WTC11 (cell line): ENCODE measurements at regions of chr5 and their contacts with region 1.

Region 1: DNA sequence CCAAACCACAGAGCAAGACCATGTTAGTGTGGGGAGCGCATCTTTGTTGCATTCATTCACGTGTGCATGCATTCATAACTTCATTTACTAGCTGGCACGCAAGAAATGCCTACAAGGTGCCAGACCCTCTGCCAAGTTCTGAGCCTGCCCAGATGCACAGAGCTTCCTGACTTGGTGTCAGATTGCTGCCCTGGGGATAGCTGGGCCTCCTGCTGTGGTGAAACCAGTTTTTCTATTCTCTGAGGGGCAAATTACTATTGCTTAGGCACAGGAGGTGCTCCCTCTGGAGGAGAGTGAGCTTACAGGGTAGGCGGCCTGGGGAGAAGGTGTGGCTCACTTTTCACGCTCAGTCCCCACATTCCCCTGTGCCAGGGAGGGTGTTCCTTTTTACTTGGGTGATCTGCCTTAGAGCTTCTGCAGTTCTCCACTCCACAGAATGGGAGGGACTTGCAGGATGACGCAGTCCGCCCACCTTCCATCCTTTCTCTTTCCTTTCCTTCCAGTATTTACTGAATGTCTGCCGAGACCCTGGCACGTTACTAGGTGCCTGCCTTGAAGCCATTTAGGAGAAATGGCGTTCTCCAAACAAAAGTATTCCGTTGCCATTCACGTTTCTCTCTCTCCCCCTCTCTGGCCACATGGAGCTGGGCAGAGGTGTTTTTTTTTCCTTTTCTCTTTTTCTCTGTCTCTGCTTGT is 27.9 kb upstream of the CTNNA1 start:
- DNase-seq: peak; percentile 78
- ATAC-seq: peak; percentile 90
- H3K4me3 Mint-ChIP-seq: peak overlapping the region; percentile 30; the same call in 1 of the 2 replicates
- H3K27ac Mint-ChIP-seq: peak overlapping the region; percentile 96
- H3K4me1 Mint-ChIP-seq: peaks cover 45% of the 10 kb centered on the region
- H3K27me3 Mint-ChIP-seq: no peaks in the 10 kb centered on the region; the same call in 1 of the 2 replicates
- CTCF ChIP-seq: 0 out of 2 replicates have a peak, but pooled peaks have one; percentile 11

Region 2: DNA sequence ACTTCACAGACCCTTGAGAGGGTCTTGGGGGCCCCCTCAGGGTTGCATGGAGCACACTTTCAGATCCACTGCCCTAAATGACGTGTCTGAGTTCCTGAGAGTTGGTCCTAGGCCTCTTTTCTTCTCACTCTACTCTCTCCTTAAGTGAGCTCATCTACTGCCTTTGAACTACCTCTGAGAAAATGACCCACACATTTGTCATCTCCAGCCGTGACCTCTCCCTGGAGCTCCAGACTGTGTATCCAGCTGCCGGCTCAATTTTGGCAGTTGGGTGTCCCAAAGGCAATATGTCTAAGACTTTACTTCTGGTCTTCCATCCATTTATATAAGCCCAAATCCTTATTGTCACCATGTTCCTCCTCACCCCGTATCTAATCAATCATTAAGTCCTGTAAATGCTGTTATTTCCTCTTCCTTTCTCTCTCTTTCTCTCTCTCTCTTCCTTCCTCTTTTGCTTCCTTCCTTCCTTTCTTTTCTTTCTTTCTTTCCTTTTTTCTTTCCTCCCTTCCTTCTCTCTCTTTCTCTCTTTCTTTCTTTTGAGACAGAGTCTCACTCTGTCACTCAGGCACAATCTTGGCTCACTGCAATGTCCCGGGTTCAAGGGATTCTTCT is 98.8 kb before region 1 on chr5:
- CTCF ChIA-PET with region 1: no interaction called
- POLR2A ChIA-PET with region 1: no interaction called
- DNase-seq: no peak
- ATAC-seq: no peak
- H3K4me3 Mint-ChIP-seq: no peak overlapping the region
- H3K27ac Mint-ChIP-seq: no peak overlapping the region
- H3K4me1 Mint-ChIP-seq: peaks cover 10% of the 10 kb centered on the region
- H3K27me3 Mint-ChIP-seq: peaks cover 2% of the 10 kb centered on the region; the same call in 1 of the 2 replicates
- CTCF ChIP-seq: no peak

Region 3: GRCh38 chr5:138706655-138707480 is 18.4 kb before region 1 on chr5:
- CTCF ChIA-PET with region 1: interaction called, 20 read pairs
- POLR2A ChIA-PET with region 1: no interaction called
- DNase-seq: no peak
- ATAC-seq: peak; percentile 61
- H3K4me3 Mint-ChIP-seq: no peak overlapping the region
- H3K27ac Mint-ChIP-seq: no peak overlapping the region
- H3K4me1 Mint-ChIP-seq: peaks cover 50% of the 10 kb centered on the region
- H3K27me3 Mint-ChIP-seq: no peaks in the 10 kb centered on the region
- CTCF ChIP-seq: no peak

Region 4: DNA sequence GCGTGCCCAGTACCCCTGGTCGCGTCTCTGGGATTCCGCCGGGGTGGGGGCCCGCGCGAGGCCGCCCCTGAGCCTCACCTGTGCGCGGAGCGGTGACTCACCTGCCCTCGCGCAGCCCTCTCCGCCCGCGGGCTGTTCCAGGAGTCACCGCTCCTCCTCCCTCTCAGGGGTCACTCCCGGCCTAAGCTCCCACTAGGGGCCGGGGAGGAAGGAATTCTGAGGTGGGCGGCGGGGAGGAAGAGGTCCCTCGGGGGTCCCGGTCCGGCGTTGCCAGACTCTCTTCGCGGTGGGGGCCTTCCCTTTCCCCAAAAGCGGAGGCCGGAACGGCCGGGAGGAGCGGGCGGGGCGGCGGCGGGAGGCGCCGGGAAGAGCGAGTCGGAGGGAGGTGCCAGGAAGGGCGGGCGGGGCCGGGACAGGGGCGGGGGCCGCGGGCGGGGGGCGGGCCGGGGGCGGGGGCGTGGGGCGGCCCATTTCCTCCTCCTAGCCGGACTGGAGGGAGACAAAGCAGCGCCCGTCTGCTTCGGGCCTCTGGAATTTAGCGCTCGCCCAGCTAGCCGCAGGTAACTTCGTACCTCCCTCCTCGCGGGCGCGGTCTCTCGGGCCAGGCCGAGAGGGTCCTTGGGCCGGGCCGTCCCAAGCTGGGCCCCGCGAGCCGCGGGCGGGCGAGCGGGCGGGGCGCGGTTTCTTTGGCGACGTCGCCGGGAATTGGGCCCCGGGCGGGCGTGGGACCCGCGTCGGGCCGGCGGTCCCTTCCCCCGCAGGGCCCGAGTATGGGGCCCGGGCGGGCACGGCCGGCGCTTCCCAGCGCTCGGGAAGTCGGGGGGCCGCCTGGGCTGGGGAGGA is 27.9 kb after region 1 on chr5 and contains the start of gene CTNNA1:
- CTCF ChIA-PET with region 1: interaction called, 10 read pairs
- POLR2A ChIA-PET with region 1: no interaction called
- DNase-seq: peak; percentile 87
- ATAC-seq: peak; percentile 81
- H3K4me3 Mint-ChIP-seq: peak within 1 kb of the TSS; percentile 86
- H3K27ac Mint-ChIP-seq: peak within 1 kb of the TSS; percentile 98
- H3K4me1 Mint-ChIP-seq: peaks cover 35% of the 10 kb centered on the region
- H3K27me3 Mint-ChIP-seq: no peaks in the 10 kb centered on the region
- CTCF ChIP-seq: no peak
- total RNA-seq, gene CTNNA1: 297 to 309 TPM (median 309 TPM) in 3 replicates